ENCODE measurements at regions of chr16 and their contacts with region 1.

Region 1: GRCh38 chr16:57185944-57186871 is at the starts of genes PSME3IP1 and RSPRY1:
- DNase-seq: peak; percentile 99
- ATAC-seq: peak; percentile 92
- H3K4me3 ChIP-seq: peak within 1 kb of the TSS; percentile 84
- H3K27ac ChIP-seq: peak within 1 kb of the TSS; percentile 94
- H3K4me1 ChIP-seq: peaks cover 5% of the 10 kb centered on the region; the same call in 1 of the 2 replicates
- H3K27me3 ChIP-seq: no peaks in the 10 kb centered on the region
- CTCF ChIP-seq: no peak
- EP300 ChIP-seq: no peak
- POLR2A ChIP-seq: peak; percentile 91
- RAD21 ChIP-seq: no peak
- polyA plus RNA-seq, gene PSME3IP1: 72.5 to 90.2 TPM
- polyA plus RNA-seq, gene RSPRY1: 18.5 to 25.1 TPM

Region 2: DNA sequence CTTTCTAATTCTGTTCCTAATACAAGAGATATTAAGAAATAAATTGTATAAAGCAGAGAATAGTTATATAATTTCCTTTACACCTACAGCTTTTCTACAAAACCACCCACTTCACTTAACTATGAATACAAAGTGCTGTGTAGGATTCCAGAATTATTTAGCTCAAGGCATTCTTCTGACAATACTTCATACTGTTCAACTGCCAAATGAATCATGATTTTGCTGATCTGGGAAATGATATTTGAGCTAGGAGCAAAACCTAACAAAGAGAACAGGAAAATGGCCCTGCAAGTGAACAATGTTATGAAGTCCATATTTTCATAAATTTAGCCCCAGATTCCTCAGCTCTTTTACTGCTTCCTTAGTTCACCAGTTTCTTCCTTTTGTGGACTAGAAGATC is 679.3 kb before region 1 on chr16:
- CTCF ChIA-PET with region 1: no interaction called
- POLR2A ChIA-PET with region 1: no interaction called
- RAD21 ChIA-PET with region 1: no interaction called
- SMC1A ChIA-PET with region 1: no interaction called
- in situ Hi-C with region 1: no loop called
- intact Hi-C with region 1: no loop called
- DNase-seq: no peak
- ATAC-seq: no peak
- H3K4me3 ChIP-seq: no peak overlapping the region
- H3K27ac ChIP-seq: no peak overlapping the region
- H3K4me1 ChIP-seq: no peaks in the 10 kb centered on the region
- H3K27me3 ChIP-seq: no peaks in the 10 kb centered on the region
- CTCF ChIP-seq: no peak
- EP300 ChIP-seq: no peak
- POLR2A ChIP-seq: no peak
- RAD21 ChIP-seq: no peak

Region 3: GRCh38 chr16:57147381-57148221 is 38.6 kb before region 1 on chr16:
- CTCF ChIA-PET with region 1: no interaction called
- POLR2A ChIA-PET with region 1: no interaction called
- RAD21 ChIA-PET with region 1: no interaction called
- SMC1A ChIA-PET with region 1: no interaction called
- in situ Hi-C with region 1: no loop called
- intact Hi-C with region 1: no loop called
- DNase-seq: no peak
- ATAC-seq: no peak
- H3K4me3 ChIP-seq: no peak overlapping the region
- H3K27ac ChIP-seq: no peak overlapping the region; the same call in 1 of the 2 replicates
- H3K4me1 ChIP-seq: peaks cover 15% of the 10 kb centered on the region
- H3K27me3 ChIP-seq: no peaks in the 10 kb centered on the region
- CTCF ChIP-seq: no peak
- EP300 ChIP-seq: no peak
- POLR2A ChIP-seq: no peak
- RAD21 ChIP-seq: no peak

Region 4: GRCh38 chr16:57196286-57196685 is 10.1 kb after region 1 on chr16:
- CTCF ChIA-PET with region 1: interaction called, 4 read pairs
- POLR2A ChIA-PET with region 1: interaction called, 10 read pairs
- RAD21 ChIA-PET with region 1: no interaction called
- SMC1A ChIA-PET with region 1: interaction called, 3 read pairs
- in situ Hi-C with region 1: no loop called
- intact Hi-C with region 1: no loop called
- DNase-seq: no peak
- ATAC-seq: no peak
- H3K4me3 ChIP-seq: no peak overlapping the region
- H3K27ac ChIP-seq: no peak overlapping the region
- H3K4me1 ChIP-seq: peaks cover 13% of the 10 kb centered on the region
- H3K27me3 ChIP-seq: no peaks in the 10 kb centered on the region
- CTCF ChIP-seq: no peak
- EP300 ChIP-seq: no peak
- POLR2A ChIP-seq: no peak
- RAD21 ChIP-seq: no peak

Region 5: GRCh38 chr16:57535680-57536305 is 349.6 kb after region 1 on chr16:
- CTCF ChIA-PET with region 1: no interaction called
- POLR2A ChIA-PET with region 1: no interaction called
- RAD21 ChIA-PET with region 1: no interaction called
- SMC1A ChIA-PET with region 1: no interaction called
- in situ Hi-C with region 1: no loop called
- intact Hi-C with region 1: loop called (anchors 5 kb)
- DNase-seq: no peak
- ATAC-seq: peak; percentile 82
- H3K4me3 ChIP-seq: peak overlapping the region; percentile 88
- H3K27ac ChIP-seq: peak overlapping the region; percentile 85
- H3K4me1 ChIP-seq: peaks cover 63% of the 10 kb centered on the region
- H3K27me3 ChIP-seq: no peaks in the 10 kb centered on the region
- CTCF ChIP-seq: 0 out of 6 replicates have a peak, but pooled peaks of 2 of the 3 experiments have one; percentile 16 to 24
- EP300 ChIP-seq: no peak
- POLR2A ChIP-seq: no peak
- RAD21 ChIP-seq: no peak

Measured in GM12878 (cell line).